Naive thymus-derived CD4-positive, alpha-beta T cell (primary cell): ENCODE measurements at regions of chr4 and their contacts with region 1.

Region 1: DNA sequence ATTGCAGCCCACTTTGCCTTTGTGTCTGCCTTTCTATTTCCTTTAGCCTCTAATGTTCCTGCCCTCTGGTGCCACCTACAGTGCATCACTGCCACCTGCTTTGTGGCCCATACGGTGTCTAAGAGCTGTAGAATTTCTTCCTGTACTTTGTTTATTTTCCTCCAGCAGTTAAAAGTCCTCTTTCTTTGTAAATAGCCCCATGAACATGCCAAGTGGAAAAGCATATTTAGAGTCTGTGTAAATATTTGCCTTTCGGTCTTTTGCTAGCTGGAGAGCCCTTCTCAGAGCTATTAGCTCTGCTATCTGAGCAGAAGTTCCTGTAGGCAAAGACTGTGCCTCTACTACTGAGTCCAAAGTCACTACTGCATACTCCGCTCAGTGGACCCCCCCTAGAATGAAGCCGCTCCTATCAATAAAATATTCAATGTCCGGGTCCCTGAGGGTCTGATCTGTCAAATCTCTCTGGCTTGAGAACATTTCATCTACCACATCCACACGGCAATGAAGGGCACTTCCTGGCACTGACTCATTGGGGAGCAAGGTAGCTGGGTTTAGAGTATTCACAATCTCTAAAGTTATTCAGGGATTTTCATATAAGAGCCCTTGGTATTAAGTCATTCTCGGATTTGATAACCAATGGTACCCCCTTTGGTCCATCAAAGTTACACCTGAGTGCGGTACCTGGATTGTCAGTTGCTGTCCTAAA is 36.3 kb downstream of the SULT1E1 start:
- DNase-seq: peak in 7 of 9 donors; percentile 34 to 71 (median 65)
- ATAC-seq: peak; percentile 96
- H3K4me3 ChIP-seq: no peak overlapping the region
- H3K4me3 Mint-ChIP-seq: peak overlapping the region in 2 of 10 donors; percentile 47 to 50
- H3K27ac ChIP-seq: no peak overlapping the region
- H3K27ac Mint-ChIP-seq: peak overlapping the region in 5 of 9 donors; percentile 6 to 75 (median 23)
- H3K4me1 ChIP-seq: peaks cover 0 to 4% of the 10 kb centered on the region in 2 donors
- H3K4me1 Mint-ChIP-seq: peaks cover 4 to 21% (median 10%) of the 10 kb centered on the region in 7 donors
- H3K27me3 ChIP-seq: no peaks in the 10 kb centered on the region
- H3K27me3 Mint-ChIP-seq: no peaks in the 10 kb centered on the region

Region 2: DNA sequence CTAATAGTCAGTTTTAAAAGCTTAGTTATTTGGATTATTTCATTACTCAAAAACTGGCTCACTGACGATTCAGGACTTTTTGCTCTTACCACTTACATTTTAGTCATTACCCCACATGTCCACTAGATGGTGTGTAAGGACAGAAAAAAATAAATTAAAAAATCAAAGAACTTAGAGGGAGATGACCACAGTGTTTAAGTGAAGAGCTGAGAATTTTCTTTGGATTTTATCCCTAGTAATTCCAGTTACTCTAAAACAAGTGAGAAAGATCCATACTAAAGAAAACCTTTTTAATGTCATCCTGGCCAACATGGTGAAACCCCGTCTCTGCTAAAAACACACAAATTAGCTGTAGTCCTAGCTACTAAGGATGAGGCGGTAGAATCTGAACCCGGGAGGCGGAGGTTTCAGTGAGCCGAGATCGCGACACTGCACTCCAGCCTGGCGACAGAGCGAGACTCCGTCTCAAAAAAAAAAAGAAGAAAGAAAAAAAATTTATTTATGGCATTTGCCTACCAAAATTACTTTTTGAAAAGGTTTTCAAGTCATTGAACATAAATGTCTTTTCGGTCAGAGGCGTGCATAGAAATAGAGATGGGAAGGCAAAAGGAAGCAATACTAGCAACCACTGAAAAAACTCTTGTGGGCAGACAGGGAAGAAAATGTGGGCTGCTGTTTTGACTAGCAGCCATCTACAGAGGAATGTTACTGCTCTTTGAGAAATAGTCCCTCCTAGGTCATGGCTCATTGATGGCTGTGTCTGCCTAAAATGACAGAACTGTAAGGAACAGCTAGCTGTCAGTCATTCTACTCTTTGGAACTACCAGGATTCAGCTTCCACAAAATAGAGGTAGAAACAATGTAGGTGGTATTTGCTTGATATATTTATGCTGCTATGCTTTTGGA is 1551.5 kb before region 1 on chr4:
- CTCF ChIA-PET with region 1: no interaction called
- POLR2A ChIA-PET with region 1: no interaction called
- intact Hi-C with region 1: loop called in 1 of 2 experiments (anchors 5 kb)
- DNase-seq: peak in 6 of 9 donors; percentile 11 to 53 (median 40)
- ATAC-seq: peak; percentile 75
- H3K4me3 ChIP-seq: no peak overlapping the region
- H3K4me3 Mint-ChIP-seq: peak overlapping the region in 9 of 10 donors; percentile 18 to 57 (median 43)
- H3K27ac ChIP-seq: no peak overlapping the region
- H3K27ac Mint-ChIP-seq: no peak overlapping the region
- H3K4me1 ChIP-seq: no peaks in the 10 kb centered on the region
- H3K4me1 Mint-ChIP-seq: peaks cover 0 to 12% (median 0%) of the 10 kb centered on the region in 7 donors
- H3K27me3 ChIP-seq: no peaks in the 10 kb centered on the region
- H3K27me3 Mint-ChIP-seq: peaks cover 0 to 16% (median 12%) of the 10 kb centered on the region in 5 donors

Region 3: GRCh38 chr4:69749771-69750170 is 73.9 kb before region 1 on chr4:
- CTCF ChIA-PET with region 1: interaction called, 10 read pairs
- POLR2A ChIA-PET with region 1: no interaction called
- intact Hi-C with region 1: no loop called
- DNase-seq: no peak
- ATAC-seq: peak; percentile 27
- H3K4me3 ChIP-seq: no peak overlapping the region
- H3K4me3 Mint-ChIP-seq: no peak overlapping the region
- H3K27ac ChIP-seq: no peak overlapping the region
- H3K27ac Mint-ChIP-seq: no peak overlapping the region
- H3K4me1 ChIP-seq: no peaks in the 10 kb centered on the region
- H3K4me1 Mint-ChIP-seq: peaks cover 0 to 46% (median 23%) of the 10 kb centered on the region in 7 donors
- H3K27me3 ChIP-seq: no peaks in the 10 kb centered on the region
- H3K27me3 Mint-ChIP-seq: no peaks in the 10 kb centered on the region

Region 4: DNA sequence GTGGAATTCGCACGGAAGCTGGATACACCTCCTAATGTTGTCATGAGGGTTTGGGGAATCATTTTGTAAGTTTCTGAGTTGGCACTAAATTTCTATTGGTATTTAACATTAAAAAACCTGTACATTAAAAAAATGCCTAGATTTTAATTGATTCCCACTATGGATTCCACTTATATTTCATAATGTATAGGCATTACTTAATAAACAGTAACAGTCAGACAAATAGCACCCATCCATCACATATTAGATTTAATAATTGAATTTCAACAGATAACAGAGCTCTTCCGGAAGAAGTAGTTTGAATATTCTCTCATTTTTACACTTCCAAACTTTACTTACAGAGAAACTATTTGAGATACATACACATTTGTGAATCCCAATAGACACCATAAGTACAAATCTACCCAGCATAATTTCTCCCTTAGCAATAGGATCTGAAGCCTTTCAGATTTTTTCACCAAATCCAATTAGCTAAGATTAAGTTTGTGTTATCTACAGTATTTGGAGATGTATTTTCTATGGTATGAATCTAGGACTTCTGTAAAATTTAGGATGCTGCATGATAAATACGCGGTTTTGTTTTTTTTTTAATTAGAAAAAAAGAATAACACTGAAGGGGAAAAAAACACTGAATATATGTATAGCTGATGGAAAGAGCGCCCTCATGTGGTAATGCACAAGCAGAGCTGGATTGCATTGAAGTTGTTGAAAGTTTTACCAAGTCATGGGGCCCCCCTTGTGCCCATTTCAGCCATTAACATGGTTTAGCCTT is 359.7 kb after region 1 on chr4:
- CTCF ChIA-PET with region 1: interaction called, 4 read pairs
- POLR2A ChIA-PET with region 1: no interaction called
- intact Hi-C with region 1: loop called in 1 of 2 experiments (anchors 1 kb)
- DNase-seq: peak in 2 of 9 donors; percentile 1 to 5
- ATAC-seq: no peak
- H3K4me3 ChIP-seq: no peak overlapping the region
- H3K4me3 Mint-ChIP-seq: no peak overlapping the region
- H3K27ac ChIP-seq: no peak overlapping the region
- H3K27ac Mint-ChIP-seq: no peak overlapping the region
- H3K4me1 ChIP-seq: no peaks in the 10 kb centered on the region
- H3K4me1 Mint-ChIP-seq: no peaks in the 10 kb centered on the region
- H3K27me3 ChIP-seq: no peaks in the 10 kb centered on the region
- H3K27me3 Mint-ChIP-seq: peaks cover 0 to 5% (median 2%) of the 10 kb centered on the region in 5 donors

Region 5: GRCh38 chr4:70505151-70505748 is 681.6 kb after region 1 on chr4:
- CTCF ChIA-PET with region 1: interaction called, 4 read pairs
- POLR2A ChIA-PET with region 1: no interaction called
- intact Hi-C with region 1: loop called (anchors 1 kb)
- DNase-seq: peak in 7 of 9 donors; percentile 19 to 49 (median 31)
- ATAC-seq: peak; percentile 73
- H3K4me3 ChIP-seq: no peak overlapping the region
- H3K4me3 Mint-ChIP-seq: no peak overlapping the region
- H3K27ac ChIP-seq: no peak overlapping the region
- H3K27ac Mint-ChIP-seq: no peak overlapping the region
- H3K4me1 ChIP-seq: no peaks in the 10 kb centered on the region
- H3K4me1 Mint-ChIP-seq: no peaks in the 10 kb centered on the region
- H3K27me3 ChIP-seq: no peaks in the 10 kb centered on the region
- H3K27me3 Mint-ChIP-seq: no peaks in the 10 kb centered on the region

Region 6: DNA sequence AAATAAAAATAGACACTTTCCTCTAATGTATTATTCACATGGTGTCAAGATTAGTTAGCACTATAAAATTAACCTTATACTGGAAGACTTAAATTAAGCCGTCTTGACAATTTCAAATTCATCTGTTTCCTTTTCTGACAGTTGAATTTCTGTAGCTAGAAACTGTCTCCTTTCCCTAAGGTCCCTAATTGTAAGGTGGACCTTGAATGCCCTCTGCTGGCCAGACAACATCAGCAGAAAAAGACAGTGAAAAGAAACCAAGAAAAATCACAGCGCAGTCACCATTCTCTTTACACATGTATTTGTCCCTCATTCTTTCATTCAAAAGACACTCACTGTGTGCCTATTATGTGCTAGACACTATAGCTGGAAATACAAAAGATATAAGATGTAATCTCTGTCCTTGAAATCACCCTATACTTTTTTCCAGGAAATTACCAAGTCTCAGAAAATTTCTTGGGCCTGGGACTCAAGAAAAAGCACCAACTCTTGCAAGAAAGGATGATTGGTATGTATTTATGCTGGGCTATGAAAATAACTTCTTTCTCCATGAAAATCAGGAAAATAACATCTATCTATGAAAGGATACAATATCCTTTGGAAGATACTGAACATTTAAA is 735.7 kb after region 1 on chr4:
- CTCF ChIA-PET with region 1: no interaction called
- POLR2A ChIA-PET with region 1: no interaction called
- intact Hi-C with region 1: loop called in 1 of 2 experiments (anchors 1 kb)
- DNase-seq: peak in 5 of 9 donors; percentile 19 to 33 (median 31)
- ATAC-seq: peak; percentile 58
- H3K4me3 ChIP-seq: no peak overlapping the region
- H3K4me3 Mint-ChIP-seq: peak overlapping the region in 4 of 10 donors; percentile 16 to 52 (median 36)
- H3K27ac ChIP-seq: no peak overlapping the region
- H3K27ac Mint-ChIP-seq: no peak overlapping the region
- H3K4me1 ChIP-seq: no peaks in the 10 kb centered on the region
- H3K4me1 Mint-ChIP-seq: peaks cover 0 to 15% (median 6%) of the 10 kb centered on the region in 7 donors
- H3K27me3 ChIP-seq: no peaks in the 10 kb centered on the region
- H3K27me3 Mint-ChIP-seq: no peaks in the 10 kb centered on the region